Tibial artery (tissue), 4 donors: ENCODE measurements at regions of chr20 and their contacts with region 1.

Region 1: GRCh38 chr20:10553326-10553984 is 118.3 kb downstream of the SLX4IP start:
- DNase-seq: peak; percentile 74 to 83
- H3K4me3 ChIP-seq: no peak overlapping the region
- H3K27ac ChIP-seq: peak overlapping the region in 1 of 2 donors; percentile 46
- H3K4me1 ChIP-seq: peaks cover 0 to 76% (median 46%) of the 10 kb centered on the region in 4 donors
- H3K27me3 ChIP-seq: no peaks in the 10 kb centered on the region
- CTCF ChIP-seq: peak; percentile 79 to 85

Region 2: GRCh38 chr20:9306517-9306916 is 1246.9 kb before region 1 on chr20:
- intact Hi-C with region 1: no loop called
- DNase-seq: no peak
- H3K4me3 ChIP-seq: no peak overlapping the region
- H3K27ac ChIP-seq: no peak overlapping the region
- H3K4me1 ChIP-seq: peaks cover 0 to 18% (median 2%) of the 10 kb centered on the region in 4 donors
- H3K27me3 ChIP-seq: no peaks in the 10 kb centered on the region
- CTCF ChIP-seq: no peak

Region 3: DNA sequence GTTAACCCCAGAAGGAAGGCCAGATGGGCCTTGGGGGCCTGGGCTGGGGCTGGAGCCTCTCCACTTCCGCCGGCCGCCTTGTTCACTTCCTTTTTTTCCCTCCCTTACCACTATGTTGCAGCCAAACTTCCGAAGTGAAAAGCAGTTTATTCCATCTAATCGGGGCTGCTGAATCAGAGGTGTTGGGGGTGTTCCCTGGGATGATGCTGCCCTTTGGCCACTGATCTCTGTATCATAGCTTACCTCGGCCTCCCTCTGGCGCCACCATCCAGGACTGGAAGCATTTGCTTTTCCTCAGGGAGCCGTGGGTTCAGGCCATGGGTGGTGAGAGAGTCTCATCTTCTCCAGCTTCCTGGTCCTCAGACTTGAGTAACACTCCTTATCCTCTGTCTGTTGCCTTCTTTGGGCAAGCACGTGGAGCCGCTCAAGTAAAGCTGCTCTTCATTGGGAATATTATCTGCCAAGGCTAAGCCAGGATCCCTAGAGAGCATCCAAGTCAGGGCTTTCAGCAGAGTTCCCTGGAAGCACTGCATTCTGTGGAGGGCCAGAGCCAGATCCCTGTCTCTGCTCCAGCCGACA is 78.8 kb before region 1 on chr20:
- intact Hi-C with region 1: loop called (anchors 5 kb)
- DNase-seq: peak; percentile 62 to 77
- H3K4me3 ChIP-seq: no peak overlapping the region
- H3K27ac ChIP-seq: peak overlapping the region; percentile 38 to 52
- H3K4me1 ChIP-seq: peaks cover 0 to 40% (median 14%) of the 10 kb centered on the region in 4 donors
- H3K27me3 ChIP-seq: no peaks in the 10 kb centered on the region
- CTCF ChIP-seq: no peak

Region 4: DNA sequence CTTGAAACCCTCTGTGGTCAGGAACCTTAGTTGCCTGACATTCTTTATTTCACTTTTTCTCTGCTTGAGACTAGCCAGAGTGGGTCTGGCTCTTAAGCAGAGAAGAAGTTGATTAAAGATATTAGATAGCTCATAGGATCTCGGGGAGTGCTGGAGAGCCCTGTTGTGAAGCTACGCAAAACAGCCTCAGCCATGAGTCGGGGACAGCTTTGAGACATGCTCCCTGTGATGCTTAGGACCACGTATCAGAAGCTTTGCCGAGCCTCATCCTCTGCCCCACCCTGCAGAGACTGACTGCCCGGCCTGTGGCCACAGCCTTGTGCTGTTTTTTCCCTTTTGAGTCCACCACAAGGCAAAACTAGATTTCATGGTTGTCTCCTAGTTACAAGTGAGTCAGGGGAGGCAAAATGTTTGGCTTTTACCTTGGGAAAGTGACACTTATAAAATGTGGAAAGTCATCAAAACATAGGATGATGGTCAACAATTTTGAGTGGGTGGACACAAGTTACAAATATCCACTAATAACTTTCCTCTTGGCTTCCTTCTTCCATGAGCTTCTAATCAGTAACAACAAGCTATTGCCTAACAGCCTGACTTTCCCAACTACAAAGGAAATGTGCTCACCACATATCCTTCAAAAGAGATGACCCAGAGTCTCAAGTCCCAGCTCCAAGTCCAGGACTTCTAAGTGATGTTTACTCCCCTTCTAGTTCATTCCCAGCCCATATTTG is 11.9 kb after region 1 on chr20:
- intact Hi-C with region 1: no loop called
- DNase-seq: peak in 1 of 2 donors; percentile 59
- H3K4me3 ChIP-seq: no peak overlapping the region
- H3K27ac ChIP-seq: peak overlapping the region; percentile 76 to 82
- H3K4me1 ChIP-seq: peaks cover 0 to 23% (median 9%) of the 10 kb centered on the region in 4 donors
- H3K27me3 ChIP-seq: no peaks in the 10 kb centered on the region
- CTCF ChIP-seq: no peak

Region 5: DNA sequence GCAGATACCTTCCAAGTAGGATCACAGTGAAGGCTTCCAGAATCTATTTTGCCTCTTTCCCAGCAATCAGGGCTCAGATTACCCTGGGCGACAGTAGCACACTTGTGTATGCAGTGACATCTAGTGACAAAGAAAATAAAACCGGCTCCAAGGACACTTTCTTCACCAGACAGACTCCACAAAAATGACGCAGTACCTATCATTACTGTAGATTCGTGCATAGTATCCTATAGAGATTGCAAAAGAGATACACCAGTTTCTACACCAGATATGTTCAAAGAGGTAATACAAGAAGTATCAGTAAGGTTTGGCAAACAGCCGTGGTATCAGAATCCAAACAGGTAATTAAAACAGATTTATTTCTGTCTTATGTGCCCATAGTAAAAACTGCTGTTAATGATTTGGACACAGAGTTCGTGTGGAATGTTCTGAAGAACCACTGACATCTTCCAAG is 720.7 kb after region 1 on chr20:
- intact Hi-C with region 1: loop called (anchors 5 kb)
- DNase-seq: peak in 1 of 2 donors; percentile 32
- H3K4me3 ChIP-seq: no peak overlapping the region
- H3K27ac ChIP-seq: no peak overlapping the region
- H3K4me1 ChIP-seq: peaks cover 0 to 10% (median 0%) of the 10 kb centered on the region in 4 donors
- H3K27me3 ChIP-seq: peaks cover 0 to 2% of the 10 kb centered on the region in 2 donors
- CTCF ChIP-seq: peak; percentile 58 to 66